K562 (cell line): ENCODE measurements at regions of chr2 and their contacts with region 1.

Region 1: GRCh38 chr2:74002487-74003391 is 18.0 kb downstream of the TET3 start:
- DNase-seq: peak; percentile 89 to 94 (median 93)
- ATAC-seq: peak; percentile 96
- H3K4me3 ChIP-seq: peak overlapping the region; percentile 58
- H3K27ac ChIP-seq: no peak overlapping the region
- H3K4me1 ChIP-seq: peaks cover 45 to 47% of the 10 kb centered on the region in 2 experiments
- H3K27me3 ChIP-seq: no peaks in the 10 kb centered on the region
- CTCF ChIP-seq: peak in 2 of 3 experiments; percentile 0 to 3; a peak in 1 of 6 replicates
- EP300 ChIP-seq: no peak
- POLR2A ChIP-seq: no peak; the same call in 1 of the 2 replicates
- RAD21 ChIP-seq: 0 out of 4 replicates have a peak, but pooled peaks of 1 of the 2 experiments have one; percentile 17

Region 2: DNA sequence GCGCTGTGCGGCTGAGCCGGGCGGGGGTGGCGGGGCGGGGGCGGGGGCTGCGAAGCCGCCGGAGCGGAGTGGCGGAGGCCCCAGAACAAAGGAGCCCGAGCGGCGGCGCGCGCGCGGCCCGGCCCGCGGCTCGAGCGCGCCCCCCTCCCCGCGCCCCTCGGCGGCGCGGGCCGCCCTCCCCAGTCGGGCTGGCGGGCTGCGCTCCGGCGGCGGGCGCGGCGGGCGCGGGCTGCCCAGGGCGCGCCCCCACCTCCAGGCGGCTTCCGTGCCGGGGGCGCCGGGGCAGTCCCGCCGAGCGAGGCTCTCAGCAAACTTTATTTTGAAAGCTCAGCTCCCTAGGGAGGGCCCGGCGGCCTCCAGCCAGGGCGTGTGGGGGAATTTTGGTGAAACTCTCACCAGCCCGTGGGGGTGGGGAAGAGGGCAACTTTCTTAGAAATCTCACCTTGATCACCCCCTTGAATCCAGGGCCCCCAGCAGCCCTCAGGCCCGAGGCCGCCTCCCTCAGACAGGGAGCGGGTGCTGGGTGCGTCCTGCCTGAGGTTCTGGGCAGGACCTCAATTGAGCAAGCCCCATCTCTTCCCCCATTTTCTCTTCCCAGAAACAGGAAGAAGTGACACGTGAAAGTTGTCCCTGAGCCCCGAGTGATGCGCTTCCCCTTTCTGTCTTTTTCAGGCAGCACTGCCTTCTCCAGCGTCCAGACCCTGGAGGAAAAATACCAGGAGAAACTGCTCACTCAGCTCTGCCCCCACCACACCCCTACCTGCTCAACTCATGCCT is 17.2 kb before region 1 on chr2:
- CTCF ChIA-PET with region 1: interaction called, 4 read pairs
- POLR2A ChIA-PET with region 1: interaction called, 23 read pairs
- in situ Hi-C with region 1: no loop called
- intact Hi-C with region 1: no loop called
- DNase-seq: peak; percentile 55 to 89 (median 81)
- ATAC-seq: no peak
- H3K4me3 ChIP-seq: peak overlapping the region; percentile 51
- H3K27ac ChIP-seq: peak overlapping the region; percentile 83
- H3K4me1 ChIP-seq: peaks cover 63% of the 10 kb centered on the region in 2 experiments
- H3K27me3 ChIP-seq: no peaks in the 10 kb centered on the region
- CTCF ChIP-seq: no peak
- EP300 ChIP-seq: 0 out of 2 replicates have a peak, but pooled peaks have one; percentile 3
- POLR2A ChIP-seq: no peak
- RAD21 ChIP-seq: no peak

Region 3: DNA sequence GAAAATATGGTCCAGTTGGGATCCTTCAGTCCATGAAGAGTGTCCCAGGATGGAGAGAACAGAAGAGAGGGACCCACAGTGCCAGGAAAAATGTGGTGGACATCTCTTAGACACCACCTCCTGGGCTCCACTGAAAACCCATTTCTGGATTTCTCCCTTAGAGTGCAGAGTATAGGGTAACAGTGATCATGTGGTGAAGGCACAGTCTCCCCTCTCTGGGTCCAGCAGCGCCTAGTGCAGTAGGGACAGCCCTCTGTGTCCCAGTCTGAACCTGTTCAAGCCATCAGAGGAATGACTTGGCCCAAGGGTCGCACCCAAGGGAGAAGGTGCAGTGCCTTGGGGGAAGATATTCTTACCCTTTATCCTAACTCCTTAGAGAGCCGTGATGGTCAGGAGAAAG is 12.1 kb after region 1 on chr2:
- CTCF ChIA-PET with region 1: no interaction called
- POLR2A ChIA-PET with region 1: interaction called, 13 read pairs
- in situ Hi-C with region 1: no loop called
- intact Hi-C with region 1: no loop called
- DNase-seq: no peak
- ATAC-seq: peak; percentile 20; the same call in 1 of the 3 replicates
- H3K4me3 ChIP-seq: no peak overlapping the region
- H3K27ac ChIP-seq: no peak overlapping the region
- H3K4me1 ChIP-seq: peaks cover 8 to 12% of the 10 kb centered on the region in 2 experiments; a peak in 4 of 5 replicates
- H3K27me3 ChIP-seq: no peaks in the 10 kb centered on the region
- CTCF ChIP-seq: no peak
- EP300 ChIP-seq: no peak
- POLR2A ChIP-seq: no peak
- RAD21 ChIP-seq: no peak

Region 4: DNA sequence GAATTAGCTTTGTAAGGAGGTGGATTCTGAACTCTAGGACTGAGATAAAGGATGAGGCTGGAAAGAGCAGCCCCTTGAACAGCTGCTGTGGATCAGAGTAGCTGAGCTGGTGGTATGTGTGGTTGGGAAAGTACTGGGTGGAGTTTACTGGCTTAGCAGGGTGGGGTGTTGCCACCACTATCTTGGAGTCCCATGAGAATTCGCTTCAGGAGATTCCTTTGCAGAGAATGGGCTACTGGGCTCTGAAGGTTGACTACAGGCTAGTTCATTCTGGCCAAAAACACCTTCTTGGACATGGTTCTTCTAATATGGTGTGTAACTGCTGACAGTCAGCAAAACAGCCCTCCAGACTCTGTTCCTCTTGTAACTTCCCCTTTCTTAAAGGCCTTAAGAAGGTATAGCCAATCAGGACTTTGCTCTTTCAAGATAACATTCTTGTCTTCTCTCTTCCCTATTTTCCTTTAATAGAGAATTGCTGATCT is 34.7 kb after region 1 on chr2:
- CTCF ChIA-PET with region 1: no interaction called
- POLR2A ChIA-PET with region 1: interaction called, 4 read pairs
- in situ Hi-C with region 1: no loop called
- intact Hi-C with region 1: loop called (anchors 5 kb)
- DNase-seq: peak; percentile 68 to 74 (median 73)
- ATAC-seq: peak; percentile 71
- H3K4me3 ChIP-seq: no peak overlapping the region
- H3K27ac ChIP-seq: peak overlapping the region; percentile 70
- H3K4me1 ChIP-seq: peaks cover 48 to 74% of the 10 kb centered on the region in 2 experiments
- H3K27me3 ChIP-seq: no peaks in the 10 kb centered on the region
- CTCF ChIP-seq: no peak
- EP300 ChIP-seq: no peak
- POLR2A ChIP-seq: no peak
- RAD21 ChIP-seq: no peak

Region 5: DNA sequence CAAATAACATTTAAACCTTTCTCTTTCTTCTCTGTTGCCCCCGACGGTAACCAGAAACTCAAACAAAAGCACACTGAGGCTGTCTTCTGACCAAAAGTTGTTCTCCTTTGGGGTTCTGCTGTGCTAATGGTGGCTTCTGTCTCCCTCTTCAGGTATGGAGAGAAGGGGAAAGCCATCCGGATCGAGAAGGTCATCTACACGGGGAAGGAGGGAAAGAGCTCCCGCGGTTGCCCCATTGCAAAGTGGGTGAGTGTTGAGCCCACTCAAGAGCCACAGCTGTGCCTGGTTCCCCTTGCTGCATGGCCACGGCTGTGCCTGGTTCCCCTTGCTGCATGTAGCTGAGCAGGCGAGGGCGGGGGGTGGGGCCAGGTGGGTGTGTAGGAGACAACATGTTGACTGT is 77.6 kb after region 1 on chr2:
- CTCF ChIA-PET with region 1: no interaction called
- POLR2A ChIA-PET with region 1: no interaction called
- in situ Hi-C with region 1: no loop called
- intact Hi-C with region 1: loop called (anchors 2 kb)
- DNase-seq: peak in 2 of 4 experiments; percentile 32 to 37
- ATAC-seq: peak; percentile 21
- H3K4me3 ChIP-seq: no peak overlapping the region
- H3K27ac ChIP-seq: no peak overlapping the region
- H3K4me1 ChIP-seq: peaks cover 37 to 44% of the 10 kb centered on the region in 2 experiments
- H3K27me3 ChIP-seq: no peaks in the 10 kb centered on the region
- CTCF ChIP-seq: peak; percentile 40 to 60 (median 50); a peak in 5 of 6 replicates
- EP300 ChIP-seq: no peak
- POLR2A ChIP-seq: no peak
- RAD21 ChIP-seq: peak; percentile 37 to 70

Region 6: GRCh38 chr2:74142340-74142739 is 139.6 kb after region 1 on chr2:
- CTCF ChIA-PET with region 1: no interaction called
- POLR2A ChIA-PET with region 1: no interaction called
- in situ Hi-C with region 1: no loop called
- intact Hi-C with region 1: loop called (anchors 5 kb)
- DNase-seq: peak; percentile 55 to 80 (median 67)
- ATAC-seq: peak; percentile 87
- H3K4me3 ChIP-seq: no peak overlapping the region
- H3K27ac ChIP-seq: peak overlapping the region; percentile 20; the same call in 2 of the 3 replicates
- H3K4me1 ChIP-seq: peaks cover 14 to 29% of the 10 kb centered on the region in 2 experiments; a peak in 4 of 5 replicates
- H3K27me3 ChIP-seq: no peaks in the 10 kb centered on the region
- CTCF ChIP-seq: peak; percentile 76 to 81 (median 79)
- EP300 ChIP-seq: no peak
- POLR2A ChIP-seq: no peak
- RAD21 ChIP-seq: peak; percentile 69 to 80